IMR-90 (cell line): ENCODE measurements at regions of chr3 and their contacts with region 1.

Region 1: DNA sequence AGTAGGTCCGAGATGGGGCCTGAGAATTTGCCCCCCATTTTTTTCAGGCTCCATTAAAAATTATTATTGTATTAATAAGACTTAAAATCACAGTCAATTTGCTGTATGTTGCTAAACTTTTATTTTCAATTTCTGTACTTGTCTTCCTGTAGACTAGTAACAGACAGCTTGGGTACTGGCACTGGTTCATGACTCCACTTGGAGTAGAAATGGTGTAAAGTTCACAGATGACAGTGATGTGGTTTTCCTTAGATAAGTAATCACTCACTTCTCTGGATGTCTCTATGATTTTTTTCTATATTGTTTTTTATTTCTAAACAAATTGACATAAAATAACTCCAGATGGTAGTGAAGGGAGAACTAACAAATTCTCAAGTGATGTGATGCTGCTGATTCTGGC is 15.6 kb upstream of the ZNF80 start:
- DNase-seq: no peak
- ATAC-seq: no peak
- H3K4me3 ChIP-seq: no peak overlapping the region
- H3K27ac ChIP-seq: no peak overlapping the region
- H3K4me1 ChIP-seq: no peaks in the 10 kb centered on the region
- H3K27me3 ChIP-seq: peaks cover 2% of the 10 kb centered on the region
- CTCF ChIP-seq: no peak
- POLR2A ChIP-seq: no peak
- RAD21 ChIP-seq: no peak

Region 2: DNA sequence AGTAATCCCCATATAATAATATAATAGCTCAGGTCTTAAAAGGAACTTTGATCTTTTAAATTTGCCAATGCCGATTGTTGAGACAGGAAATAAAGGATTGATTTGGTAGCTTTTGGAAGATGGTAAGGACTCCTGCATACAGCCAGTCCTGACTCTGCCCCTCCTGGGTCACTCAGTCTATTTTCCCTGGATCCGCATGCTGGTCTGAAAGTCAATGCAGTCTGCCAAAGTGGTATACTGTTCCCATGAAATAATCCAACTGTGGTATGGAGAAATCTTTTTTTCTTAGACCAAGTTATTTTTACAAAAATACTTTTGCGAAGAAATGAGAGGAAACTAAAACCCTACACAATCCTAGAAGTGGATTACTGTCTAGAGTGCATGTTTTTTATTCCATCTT is 232.0 kb after region 1 on chr3:
- CTCF ChIA-PET with region 1: no interaction called
- POLR2A ChIA-PET with region 1: interaction called, 14 read pairs
- dilution Hi-C with region 1: no loop called
- in situ Hi-C with region 1: no loop called
- intact Hi-C with region 1: no loop called
- DNase-seq: no peak
- ATAC-seq: no peak
- H3K4me3 ChIP-seq: no peak overlapping the region
- H3K27ac ChIP-seq: no peak overlapping the region
- H3K4me1 ChIP-seq: no peaks in the 10 kb centered on the region; the same call in 1 of the 2 replicates
- H3K27me3 ChIP-seq: no peaks in the 10 kb centered on the region
- CTCF ChIP-seq: no peak
- POLR2A ChIP-seq: no peak
- RAD21 ChIP-seq: no peak